K562 (cell line): ENCODE measurements at regions of chr16 and their contacts with region 1.

Region 1: DNA sequence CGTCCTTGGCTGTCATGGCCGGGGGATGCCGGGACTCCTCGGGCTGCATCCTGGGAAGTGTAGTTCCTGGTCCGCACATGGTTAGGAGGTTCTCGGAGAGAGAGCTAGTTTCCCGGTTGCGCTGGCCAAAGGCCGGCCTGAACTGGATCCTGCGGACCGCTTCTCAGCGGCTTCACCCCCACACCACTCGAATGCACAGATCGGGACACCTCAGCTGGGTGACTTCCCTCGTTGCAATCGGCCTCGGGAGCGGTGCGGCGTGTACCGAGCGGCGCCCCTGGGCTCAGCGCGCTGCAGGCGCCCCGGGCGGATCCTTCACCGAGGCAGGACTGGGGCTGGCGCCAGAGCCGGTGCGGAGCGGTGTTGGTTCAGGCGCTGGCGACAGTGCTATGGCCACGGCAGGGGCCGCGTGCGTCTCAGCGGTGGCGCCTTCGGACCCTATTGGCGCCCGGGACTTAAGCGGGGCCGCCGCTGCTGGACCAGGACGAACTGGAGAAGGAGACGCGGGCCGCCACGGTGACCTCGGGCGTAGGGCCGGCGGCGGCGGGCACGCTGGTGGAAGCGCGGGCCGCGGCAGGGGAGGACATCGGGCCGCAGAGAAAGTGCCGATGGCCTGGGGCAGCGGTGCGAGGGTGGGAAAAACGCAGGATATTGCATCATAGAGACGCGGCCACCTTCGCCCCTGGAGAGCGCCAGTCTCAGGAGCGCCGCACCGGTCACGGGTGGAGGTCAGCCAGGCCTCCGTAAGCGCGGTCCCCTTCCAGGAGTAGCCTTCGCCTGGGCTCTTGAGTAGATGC is 11.4 kb downstream of the ZNF629 start:
- DNase-seq: peak; percentile 86 to 93 (median 90)
- ATAC-seq: peak; percentile 84
- H3K4me3 ChIP-seq: peak overlapping the region; percentile 66
- H3K27ac ChIP-seq: peak overlapping the region; percentile 94
- H3K4me1 ChIP-seq: peaks cover 27 to 49% of the 10 kb centered on the region in 2 experiments
- H3K27me3 ChIP-seq: no peaks in the 10 kb centered on the region
- CTCF ChIP-seq: 0 out of 6 replicates have a peak, but pooled peaks of 1 of the 3 experiments have one; percentile 4
- EP300 ChIP-seq: 0 out of 2 replicates have a peak, but pooled peaks have one; percentile 31
- POLR2A ChIP-seq: peak; percentile 93
- RAD21 ChIP-seq: no peak; a peak in 1 of 4 replicates

Region 2: GRCh38 chr16:29237971-29238370 is 1537.6 kb before region 1 on chr16:
- CTCF ChIA-PET with region 1: no interaction called
- POLR2A ChIA-PET with region 1: no interaction called
- in situ Hi-C with region 1: no loop called
- intact Hi-C with region 1: no loop called
- DNase-seq: no peak
- ATAC-seq: no peak
- H3K4me3 ChIP-seq: no peak overlapping the region
- H3K27ac ChIP-seq: no peak overlapping the region
- H3K4me1 ChIP-seq: peaks cover 0 to 8% of the 10 kb centered on the region in 2 experiments; a peak in 1 of 5 replicates
- H3K27me3 ChIP-seq: peaks cover 0 to 32% of the 10 kb centered on the region in 2 experiments; a peak in 3 of 5 replicates
- CTCF ChIP-seq: no peak
- EP300 ChIP-seq: no peak
- POLR2A ChIP-seq: no peak
- RAD21 ChIP-seq: no peak

Region 3: DNA sequence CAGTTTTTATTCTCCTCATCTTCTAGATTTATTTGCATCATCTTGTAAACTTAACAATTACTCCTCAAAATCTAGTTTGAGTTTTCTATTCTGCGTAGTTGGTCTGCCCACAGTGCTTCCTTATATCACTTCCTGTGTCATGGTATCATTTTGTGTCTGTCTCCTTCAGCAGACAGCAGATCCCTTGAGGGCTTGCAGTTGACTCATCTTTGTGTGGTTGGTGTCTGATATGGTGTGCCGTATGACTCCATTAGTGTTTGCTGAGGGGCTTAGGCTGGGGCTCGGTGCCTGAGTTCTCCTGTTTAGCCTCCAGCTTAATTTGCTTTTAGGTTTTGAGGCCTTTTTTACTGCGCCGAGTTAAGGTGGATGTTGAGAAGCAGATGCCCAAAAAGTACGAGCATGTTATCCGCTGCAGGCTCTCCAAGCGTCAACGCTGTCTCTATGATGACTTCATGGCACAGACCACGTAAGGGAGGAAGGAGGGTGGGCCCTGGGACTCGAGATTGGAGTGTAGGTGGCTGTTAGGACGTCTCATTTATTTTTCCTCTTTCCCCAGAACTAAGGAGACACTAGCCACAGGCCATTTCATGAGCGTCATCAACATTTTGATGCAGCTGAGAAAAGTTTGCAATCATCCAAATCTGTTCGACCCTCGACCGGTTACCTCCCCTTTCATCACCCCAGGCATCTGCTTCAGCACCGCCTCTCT is 59.7 kb before region 1 on chr16:
- CTCF ChIA-PET with region 1: no interaction called
- POLR2A ChIA-PET with region 1: interaction called, 5 read pairs
- in situ Hi-C with region 1: no loop called
- intact Hi-C with region 1: loop called (anchors 10 kb)
- DNase-seq: peak in 1 of 4 experiments; percentile 24
- ATAC-seq: no peak; the same call in none of the 3 replicates
- H3K4me3 ChIP-seq: no peak overlapping the region
- H3K27ac ChIP-seq: no peak overlapping the region; the same call in 2 of the 3 replicates
- H3K4me1 ChIP-seq: no peaks in the 10 kb centered on the region
- H3K27me3 ChIP-seq: no peaks in the 10 kb centered on the region
- CTCF ChIP-seq: no peak
- EP300 ChIP-seq: no peak
- POLR2A ChIP-seq: no peak
- RAD21 ChIP-seq: no peak

Region 4: DNA sequence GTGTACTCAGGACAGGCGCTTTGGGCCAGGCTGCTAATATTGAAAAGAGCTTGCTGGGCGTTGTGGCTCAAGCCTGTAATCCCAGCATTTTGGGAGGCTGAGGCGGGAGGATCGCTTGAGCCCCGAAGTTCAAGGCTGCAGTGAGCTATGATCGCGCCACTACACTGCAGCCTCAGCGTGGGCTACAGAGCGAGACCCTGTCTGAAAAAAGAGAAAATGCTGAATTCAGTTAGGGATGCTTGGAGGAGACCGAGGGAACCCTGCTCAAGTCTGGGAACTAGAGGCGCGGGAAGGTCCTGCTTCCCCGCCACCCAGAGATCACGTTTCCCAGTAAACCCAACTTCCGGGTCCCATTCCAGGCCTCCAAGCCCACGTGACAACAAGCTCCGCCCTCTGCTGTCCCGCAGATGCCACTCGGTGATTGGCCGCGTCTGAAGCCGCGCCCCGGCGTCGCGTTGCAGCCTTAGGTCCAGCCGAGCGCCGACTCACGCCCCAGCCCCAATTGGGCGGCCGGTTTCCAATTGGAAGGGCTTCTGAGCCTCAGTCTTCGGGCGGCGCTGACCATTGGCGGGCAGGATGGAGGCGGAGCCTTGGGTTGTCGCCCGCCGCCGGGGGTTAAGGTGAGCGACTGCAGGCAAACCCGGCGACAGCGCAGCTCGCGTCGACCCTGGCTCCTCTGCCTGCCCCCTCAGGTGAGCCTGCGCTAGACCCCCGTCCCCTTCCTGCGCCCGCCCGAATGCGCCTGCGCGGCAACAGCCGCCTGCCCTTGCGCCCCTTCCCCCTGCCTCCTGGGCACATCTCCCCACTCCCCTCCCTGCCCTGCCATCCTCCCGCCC is 27.6 kb before region 1 on chr16 and contains the start of gene PHKG2:
- CTCF ChIA-PET with region 1: no interaction called
- POLR2A ChIA-PET with region 1: interaction called, 19 read pairs
- in situ Hi-C with region 1: no loop called
- intact Hi-C with region 1: no loop called
- DNase-seq: peak; percentile 93 to 100 (median 95)
- ATAC-seq: peak; percentile 100
- H3K4me3 ChIP-seq: peak within 1 kb of the TSS; percentile 68
- H3K27ac ChIP-seq: peak within 1 kb of the TSS; percentile 87
- H3K4me1 ChIP-seq: peaks cover 8 to 17% of the 10 kb centered on the region in 2 experiments; a peak in 4 of 5 replicates
- H3K27me3 ChIP-seq: no peaks in the 10 kb centered on the region
- CTCF ChIP-seq: no peak
- EP300 ChIP-seq: no peak
- POLR2A ChIP-seq: peak; percentile 90
- RAD21 ChIP-seq: no peak
- polyA plus RNA-seq, gene PHKG2: 5.8 to 14.1 TPM

Region 5: GRCh38 chr16:30761928-30762810 is 13.4 kb before region 1 on chr16 and contains the starts of genes CFAP119 and RNF40:
- CTCF ChIA-PET with region 1: no interaction called
- POLR2A ChIA-PET with region 1: interaction called, 16 read pairs
- in situ Hi-C with region 1: no loop called
- intact Hi-C with region 1: no loop called
- DNase-seq: peak; percentile 96 to 100 (median 98)
- ATAC-seq: peak; percentile 94
- H3K4me3 ChIP-seq: peak within 1 kb of the TSS; percentile 88
- H3K27ac ChIP-seq: peak within 1 kb of the TSS; percentile 87
- H3K4me1 ChIP-seq: peaks cover 19 to 51% of the 10 kb centered on the region in 2 experiments; a peak in 4 of 5 replicates
- H3K27me3 ChIP-seq: no peaks in the 10 kb centered on the region
- CTCF ChIP-seq: no peak
- EP300 ChIP-seq: no peak
- POLR2A ChIP-seq: peak; percentile 86
- RAD21 ChIP-seq: no peak
- polyA plus RNA-seq, gene CFAP119: 5.5 to 6.2 TPM
- polyA plus RNA-seq, gene RNF40: 6.2 to 9.1 TPM

Region 6: GRCh38 chr16:30793508-30794069 is 18.0 kb after region 1 on chr16:
- CTCF ChIA-PET with region 1: no interaction called
- POLR2A ChIA-PET with region 1: interaction called, 16 read pairs
- in situ Hi-C with region 1: no loop called
- intact Hi-C with region 1: no loop called
- DNase-seq: no peak
- ATAC-seq: peak; percentile 26
- H3K4me3 ChIP-seq: no peak overlapping the region
- H3K27ac ChIP-seq: no peak overlapping the region
- H3K4me1 ChIP-seq: peaks cover 0 to 10% of the 10 kb centered on the region in 2 experiments; a peak in 3 of 5 replicates
- H3K27me3 ChIP-seq: no peaks in the 10 kb centered on the region
- CTCF ChIP-seq: no peak
- EP300 ChIP-seq: no peak
- POLR2A ChIP-seq: no peak
- RAD21 ChIP-seq: no peak

Region 7: GRCh38 chr16:30813821-30814189 is 38.2 kb after region 1 on chr16:
- CTCF ChIA-PET with region 1: no interaction called
- POLR2A ChIA-PET with region 1: interaction called, 5 read pairs
- in situ Hi-C with region 1: no loop called
- intact Hi-C with region 1: loop called (anchors 1 kb)
- DNase-seq: no peak
- ATAC-seq: no peak
- H3K4me3 ChIP-seq: peak overlapping the region; percentile 41
- H3K27ac ChIP-seq: peak overlapping the region; percentile 69
- H3K4me1 ChIP-seq: peaks cover 16% of the 10 kb centered on the region in 2 experiments
- H3K27me3 ChIP-seq: no peaks in the 10 kb centered on the region
- CTCF ChIP-seq: no peak
- EP300 ChIP-seq: no peak
- POLR2A ChIP-seq: no peak
- RAD21 ChIP-seq: no peak